ENCODE measurements at regions of chr9 and their contacts with region 1.

Region 1: DNA sequence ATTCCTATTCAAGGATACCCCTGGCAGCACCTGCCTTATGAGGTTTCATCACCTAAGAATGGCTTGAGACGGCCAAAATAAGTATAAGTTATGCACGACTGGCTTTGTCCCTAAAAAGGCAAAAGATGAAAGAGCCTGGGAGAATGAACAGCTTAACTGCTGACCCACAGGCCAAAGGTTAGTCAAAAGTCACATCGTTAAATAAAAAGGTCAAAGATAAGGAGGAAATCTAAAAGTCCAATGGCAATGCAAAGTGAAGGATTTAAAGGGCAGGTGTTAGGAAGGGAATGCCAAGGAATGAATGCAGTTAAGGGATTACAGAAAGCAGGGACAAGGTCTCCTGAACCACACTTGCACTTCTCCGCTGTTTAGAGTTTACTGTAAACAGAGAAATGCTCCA is 5.6 kb downstream of the TAL2 start:
- DNase-seq: no peak
- ATAC-seq: no peak
- H3K4me3 ChIP-seq: no peak overlapping the region
- H3K27ac ChIP-seq: no peak overlapping the region
- H3K4me1 ChIP-seq: no peaks in the 10 kb centered on the region
- H3K27me3 ChIP-seq: peaks cover 5% of the 10 kb centered on the region
- CTCF ChIP-seq: no peak
- POLR2A ChIP-seq: no peak
- RAD21 ChIP-seq: no peak

Region 2: DNA sequence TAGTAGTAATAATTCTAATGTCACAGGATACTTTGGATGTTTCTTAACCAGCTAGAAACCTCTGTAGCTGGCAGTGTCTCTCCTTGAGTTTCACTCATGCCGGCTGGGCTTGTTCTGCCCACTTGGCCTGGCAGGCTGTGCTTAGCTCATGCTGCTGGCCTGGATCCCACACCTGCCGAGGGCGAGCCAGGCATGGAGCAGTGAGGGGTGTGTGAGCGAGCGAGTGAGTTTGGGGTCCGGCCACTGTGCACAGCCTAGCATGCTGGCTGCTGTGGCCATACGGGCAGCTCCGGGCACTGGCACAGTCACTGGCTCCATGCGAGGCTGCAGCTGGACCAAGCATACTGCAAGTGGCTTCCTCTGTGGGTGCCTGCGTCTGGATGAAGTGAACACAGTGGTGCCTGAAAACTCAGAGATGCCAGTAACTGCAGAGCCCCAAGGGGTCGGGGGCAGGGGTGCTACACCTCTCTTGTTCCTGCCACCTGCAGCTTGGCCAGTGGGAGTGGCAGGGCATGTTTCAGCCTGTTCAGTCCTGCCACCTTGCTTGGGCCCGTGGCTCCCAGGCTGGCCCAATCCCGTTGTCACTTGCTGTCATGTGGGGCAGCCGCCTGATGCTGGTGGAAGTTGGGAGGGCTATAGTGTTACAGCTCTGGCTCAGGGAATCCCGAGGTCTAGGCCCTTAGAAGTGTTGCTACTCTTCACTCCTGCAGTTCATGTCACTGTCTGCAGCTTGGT is 210.1 kb before region 1 on chr9:
- CTCF ChIA-PET with region 1: no interaction called
- POLR2A ChIA-PET with region 1: no interaction called
- dilution Hi-C with region 1: no loop called
- in situ Hi-C with region 1: no loop called
- intact Hi-C with region 1: no loop called
- DNase-seq: no peak
- ATAC-seq: no peak
- H3K4me3 ChIP-seq: no peak overlapping the region
- H3K27ac ChIP-seq: no peak overlapping the region
- H3K4me1 ChIP-seq: peaks cover 4% of the 10 kb centered on the region
- H3K27me3 ChIP-seq: no peaks in the 10 kb centered on the region
- CTCF ChIP-seq: no peak
- POLR2A ChIP-seq: no peak
- RAD21 ChIP-seq: no peak

Region 3: GRCh38 chr9:105681724-105682123 is 13.9 kb after region 1 on chr9:
- CTCF ChIA-PET with region 1: no interaction called
- POLR2A ChIA-PET with region 1: interaction called, 17 read pairs
- dilution Hi-C with region 1: no loop called
- in situ Hi-C with region 1: no loop called
- intact Hi-C with region 1: no loop called
- DNase-seq: peak; percentile 86
- ATAC-seq: peak; percentile 98
- H3K4me3 ChIP-seq: no peak overlapping the region
- H3K27ac ChIP-seq: no peak overlapping the region
- H3K4me1 ChIP-seq: no peaks in the 10 kb centered on the region
- H3K27me3 ChIP-seq: peaks cover 5% of the 10 kb centered on the region
- CTCF ChIP-seq: no peak
- POLR2A ChIP-seq: no peak
- RAD21 ChIP-seq: no peak